HCT116 (cell line): ENCODE measurements at regions of chr21 and their contacts with region 1.

Region 1: DNA sequence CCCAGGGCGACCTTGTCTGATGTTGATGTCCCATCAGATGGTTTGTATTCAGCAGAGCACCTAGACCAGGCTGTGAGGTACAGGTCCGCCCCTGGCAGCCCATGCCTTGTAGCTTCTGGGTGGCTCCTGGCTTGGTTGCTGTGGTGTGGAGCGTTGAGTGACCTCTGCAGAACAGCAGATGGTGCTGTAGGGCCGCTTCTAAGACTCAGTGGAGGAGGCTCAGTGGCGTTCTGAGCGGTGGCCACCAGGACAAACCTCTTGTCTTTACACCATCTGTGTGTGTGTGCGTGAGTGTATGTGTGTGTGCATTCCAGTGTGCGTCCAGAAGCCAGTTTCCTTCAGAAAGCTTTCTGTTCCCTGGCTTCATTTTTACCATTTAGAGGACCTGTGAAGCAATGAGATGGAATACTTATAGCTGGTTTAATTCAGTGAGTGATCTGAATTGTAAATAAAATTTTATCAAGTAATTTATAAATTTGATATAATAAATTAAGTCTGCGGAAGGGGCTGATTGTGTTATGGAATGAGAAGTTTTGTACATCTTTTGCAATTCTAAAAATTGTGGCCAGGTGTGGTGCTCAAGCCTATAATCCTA is 66.1 kb downstream of the ADARB1 start:
- DNase-seq: peak; percentile 79
- ATAC-seq: peak; percentile 96
- H3K4me3 ChIP-seq: no peak overlapping the region
- H3K27ac ChIP-seq: no peak overlapping the region
- H3K4me1 ChIP-seq: peaks cover 10 to 24% of the 10 kb centered on the region in 2 experiments; a peak in 3 of 4 replicates
- H3K27me3 ChIP-seq: no peaks in the 10 kb centered on the region
- CTCF ChIP-seq: peak; percentile 86 to 93 (median 88)
- POLR2A ChIP-seq: no peak
- RAD21 ChIP-seq: peak; percentile 89

Region 2: DNA sequence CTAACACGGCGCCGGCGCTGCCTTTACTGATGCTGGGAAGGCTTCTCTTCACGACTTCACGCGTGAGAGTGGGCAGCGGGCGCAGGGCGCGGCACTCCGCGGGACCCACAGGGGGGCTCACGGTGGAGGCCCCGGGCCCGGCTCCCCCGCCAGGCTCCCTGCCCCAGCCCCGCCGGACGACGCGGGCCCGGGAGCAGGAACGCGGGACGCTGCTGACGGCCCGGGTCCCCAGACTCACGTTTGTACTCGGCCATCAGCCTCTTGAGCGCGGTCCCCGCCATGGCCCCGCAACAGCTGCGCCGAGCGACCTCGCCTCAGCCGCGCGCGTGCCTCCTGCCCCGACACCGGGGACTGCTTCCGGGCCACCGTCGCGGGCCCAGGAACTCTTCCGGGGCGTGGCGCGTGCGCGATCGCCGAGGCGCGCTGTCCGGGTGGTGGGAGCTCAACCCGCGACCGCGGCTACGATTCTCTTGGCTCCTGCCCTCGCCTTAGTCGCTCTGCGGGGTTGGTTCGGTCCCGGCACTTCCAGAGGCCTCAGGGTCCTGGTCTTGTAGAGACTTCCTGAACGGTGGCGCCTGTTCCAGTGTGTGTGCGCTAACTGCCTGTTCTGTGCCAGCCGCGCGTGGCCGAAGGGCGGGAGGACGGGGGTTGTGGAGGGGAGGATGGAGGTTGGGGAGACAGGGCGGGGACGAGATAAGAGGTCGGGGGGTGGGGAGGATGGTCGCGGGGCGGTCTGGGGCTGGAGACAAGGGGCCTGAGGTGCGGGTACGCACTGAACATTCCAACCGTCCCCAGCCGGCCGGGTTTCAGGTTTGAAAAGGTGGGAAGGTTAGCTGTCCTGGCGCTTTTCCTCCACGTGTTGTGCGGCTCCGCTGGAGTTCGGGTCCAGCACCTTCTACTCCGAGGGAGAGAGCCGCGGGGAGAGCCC is 338.7 kb before region 1 on chr21 and contains the start of gene UBE2G2:
- CTCF ChIA-PET with region 1: interaction called, 12 read pairs
- POLR2A ChIA-PET with region 1: interaction called, 3 read pairs
- RAD21 ChIA-PET with region 1: no interaction called
- intact Hi-C with region 1: loop called (anchors 1 kb)
- DNase-seq: peak; percentile 27
- ATAC-seq: peak; percentile 89
- H3K4me3 ChIP-seq: peak within 1 kb of the TSS; percentile 78 to 88
- H3K27ac ChIP-seq: peak within 1 kb of the TSS; percentile 74
- H3K4me1 ChIP-seq: peaks cover 11 to 20% of the 10 kb centered on the region in 2 experiments
- H3K27me3 ChIP-seq: no peaks in the 10 kb centered on the region
- CTCF ChIP-seq: no peak
- POLR2A ChIP-seq: peak; percentile 44
- RAD21 ChIP-seq: no peak
- total RNA-seq, gene UBE2G2: 86.5 TPM

Region 3: DNA sequence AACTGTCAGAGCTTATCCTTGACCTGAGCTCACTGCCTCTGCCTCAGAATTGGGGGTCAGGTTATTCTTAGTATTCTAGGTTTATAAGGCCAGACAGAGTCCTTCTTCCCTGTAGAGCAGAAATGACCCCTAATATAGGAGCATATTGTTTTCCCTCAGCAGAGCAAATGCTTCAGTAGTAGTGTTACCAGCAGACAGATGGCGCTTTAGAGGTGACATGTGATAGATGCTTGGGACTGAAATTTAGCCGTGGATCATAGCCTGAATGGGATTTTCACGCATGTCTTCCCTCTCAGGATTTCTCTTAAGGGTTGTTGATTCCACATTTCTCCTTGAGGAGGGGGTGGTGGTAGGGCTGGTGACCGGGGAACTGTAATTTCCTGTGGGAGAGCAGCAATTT is 41.6 kb before region 1 on chr21:
- CTCF ChIA-PET with region 1: interaction called, 20 read pairs
- POLR2A ChIA-PET with region 1: no interaction called
- RAD21 ChIA-PET with region 1: no interaction called
- intact Hi-C with region 1: no loop called
- DNase-seq: no peak
- ATAC-seq: peak; percentile 76
- H3K4me3 ChIP-seq: no peak overlapping the region
- H3K27ac ChIP-seq: no peak overlapping the region
- H3K4me1 ChIP-seq: peaks cover 12 to 15% of the 10 kb centered on the region in 2 experiments
- H3K27me3 ChIP-seq: no peaks in the 10 kb centered on the region
- CTCF ChIP-seq: peak; percentile 11 to 70 (median 64); a peak in 4 of 6 replicates
- POLR2A ChIP-seq: no peak
- RAD21 ChIP-seq: no peak

Region 4: DNA sequence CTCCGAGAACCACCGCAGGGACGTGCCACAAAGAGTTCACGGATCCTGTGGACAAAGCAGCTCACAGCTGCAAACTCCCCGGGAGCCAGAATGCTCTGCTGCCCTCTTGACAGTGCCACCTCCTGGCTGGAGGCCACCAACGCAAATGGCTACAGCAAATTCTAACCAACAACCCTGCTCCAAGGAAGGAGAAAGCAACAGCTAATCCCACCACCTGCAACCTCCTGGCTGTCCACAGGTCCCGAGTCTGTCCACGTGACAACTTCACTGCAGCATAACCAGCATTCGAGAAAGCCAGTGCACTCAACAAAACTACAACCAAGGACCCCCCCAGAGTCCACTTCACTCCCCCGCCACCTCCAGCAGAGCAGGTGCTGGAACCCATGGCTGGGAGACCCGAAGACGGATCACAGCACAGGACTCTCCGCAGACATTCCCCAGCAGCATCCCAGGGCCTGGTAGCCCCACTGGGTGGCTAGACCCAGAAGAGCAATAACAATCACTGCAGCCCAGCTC is 129.9 kb after region 1 on chr21:
- CTCF ChIA-PET with region 1: interaction called, 13 read pairs
- POLR2A ChIA-PET with region 1: no interaction called
- RAD21 ChIA-PET with region 1: interaction called in 1 of 2 experiments, 4 read pairs
- intact Hi-C with region 1: no loop called
- DNase-seq: no peak
- ATAC-seq: peak; percentile 73
- H3K4me3 ChIP-seq: no peak overlapping the region
- H3K27ac ChIP-seq: no peak overlapping the region
- H3K4me1 ChIP-seq: no peaks in the 10 kb centered on the region
- H3K27me3 ChIP-seq: no peaks in the 10 kb centered on the region
- CTCF ChIP-seq: peak in 2 of 3 experiments; percentile 51 to 52; a peak in 4 of 6 replicates
- POLR2A ChIP-seq: no peak
- RAD21 ChIP-seq: no peak

Region 5: DNA sequence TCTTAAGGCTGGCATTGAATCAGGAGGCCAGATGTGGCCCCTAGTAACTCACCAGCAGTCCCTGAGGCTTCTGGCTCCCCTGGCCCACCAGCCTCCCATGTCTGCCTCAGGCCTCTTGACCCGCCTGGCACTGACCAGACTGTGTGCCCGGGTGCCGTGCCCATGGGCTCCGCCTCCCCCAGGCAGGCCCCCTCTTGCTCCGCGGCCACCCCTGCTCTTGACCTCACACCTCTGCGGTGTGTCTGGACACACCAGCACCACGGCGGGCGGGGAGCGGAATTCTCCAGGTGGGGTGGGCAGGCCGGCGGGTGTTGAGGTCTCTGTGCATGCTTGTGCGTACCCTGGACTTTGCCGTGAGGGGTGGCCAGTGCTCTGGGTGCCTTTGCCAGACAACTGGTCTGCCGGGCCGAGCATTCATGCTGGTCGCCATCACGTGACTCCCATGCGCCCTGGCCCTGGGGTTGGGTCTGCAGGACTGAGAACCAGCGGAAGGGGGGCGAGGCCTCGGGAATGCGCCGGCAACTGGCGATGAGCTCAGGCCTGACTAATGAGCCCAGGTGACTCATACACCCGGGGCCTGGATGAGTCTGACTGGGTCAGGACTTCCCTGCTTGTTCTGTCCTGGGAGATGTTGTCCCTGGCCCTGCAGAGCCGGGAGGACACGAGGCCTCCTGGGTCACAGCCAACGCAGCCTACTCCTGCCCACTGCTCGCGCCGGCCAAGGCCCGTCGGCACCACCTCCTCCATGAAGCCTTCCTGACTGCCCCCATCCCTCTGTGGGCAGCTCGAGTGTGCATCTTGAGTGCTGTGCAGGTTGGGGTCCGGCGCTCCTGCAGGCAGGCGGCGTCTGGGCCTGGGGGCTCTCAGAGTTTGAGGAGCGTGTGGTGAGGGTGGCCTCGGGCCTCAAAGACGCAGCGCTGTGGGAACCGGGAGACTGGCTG is 287.2 kb after region 1 on chr21:
- CTCF ChIA-PET with region 1: interaction called, 3 read pairs
- POLR2A ChIA-PET with region 1: no interaction called
- RAD21 ChIA-PET with region 1: no interaction called
- intact Hi-C with region 1: loop called (anchors 2 kb)
- DNase-seq: peak; percentile 67
- ATAC-seq: peak; percentile 94
- H3K4me3 ChIP-seq: peak overlapping the region; percentile 11 to 49; a peak in 3 of 4 replicates
- H3K27ac ChIP-seq: peak overlapping the region; percentile 52
- H3K4me1 ChIP-seq: peaks cover 37 to 58% of the 10 kb centered on the region in 2 experiments
- H3K27me3 ChIP-seq: no peaks in the 10 kb centered on the region
- CTCF ChIP-seq: no peak
- POLR2A ChIP-seq: no peak
- RAD21 ChIP-seq: no peak

Region 6: DNA sequence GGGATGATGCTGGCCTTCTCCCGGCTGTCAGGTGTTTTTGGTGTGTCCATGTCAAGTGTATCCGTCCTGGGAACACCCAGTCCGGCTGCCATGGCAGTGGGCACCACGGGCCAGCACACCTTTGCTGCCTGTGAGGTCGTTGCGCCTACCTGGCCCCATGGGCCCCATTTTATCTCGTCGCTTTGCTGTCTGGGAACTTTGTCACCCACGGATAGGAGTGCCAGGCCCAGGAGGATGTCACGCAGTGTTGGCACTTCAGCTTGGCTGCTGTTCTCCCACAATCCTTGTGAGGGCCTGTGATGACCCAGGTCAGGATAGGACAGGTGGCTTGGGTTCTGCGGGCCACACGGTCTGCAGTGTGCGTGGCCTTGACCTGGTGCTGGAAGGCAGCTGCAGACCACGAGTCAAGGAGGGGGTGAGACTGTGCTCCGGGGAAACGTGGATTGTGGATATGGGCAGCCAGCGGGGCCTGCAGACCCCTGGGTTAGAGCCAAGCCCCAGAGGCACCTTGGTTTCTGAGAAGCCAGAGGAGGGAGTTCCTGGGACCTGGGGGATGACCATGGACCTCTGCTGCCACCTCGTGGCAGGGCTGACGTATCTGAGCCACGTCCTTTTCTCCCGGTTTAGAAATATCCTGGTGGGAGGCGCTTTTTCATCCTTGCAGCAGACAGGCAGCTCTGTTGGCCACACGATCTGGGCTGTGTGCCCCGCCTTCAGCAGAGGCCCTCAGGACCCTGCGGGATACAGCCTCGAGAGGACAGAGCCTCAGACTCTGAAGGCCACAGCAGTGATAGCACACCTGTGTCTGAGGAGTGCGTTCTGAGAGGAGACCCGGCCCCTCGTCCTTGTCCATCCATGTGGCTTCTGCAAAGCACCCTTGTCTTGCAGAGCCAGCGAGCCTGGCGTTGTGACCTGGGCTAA is 680.0 kb after region 1 on chr21:
- CTCF ChIA-PET with region 1: interaction called, 4 read pairs
- POLR2A ChIA-PET with region 1: no interaction called
- RAD21 ChIA-PET with region 1: interaction called in 1 of 2 experiments, 3 read pairs
- intact Hi-C with region 1: loop called (anchors 1 kb)
- DNase-seq: peak; percentile 75
- ATAC-seq: peak; percentile 92
- H3K4me3 ChIP-seq: no peak overlapping the region
- H3K27ac ChIP-seq: no peak overlapping the region; the same call in 1 of the 2 replicates
- H3K4me1 ChIP-seq: peaks cover 6 to 18% of the 10 kb centered on the region in 2 experiments; a peak in 3 of 4 replicates
- H3K27me3 ChIP-seq: no peaks in the 10 kb centered on the region; the same call in 1 of the 2 replicates
- CTCF ChIP-seq: peak; percentile 82 to 85 (median 84)
- POLR2A ChIP-seq: no peak
- RAD21 ChIP-seq: peak; percentile 90